MCF 10A (cell line): ENCODE measurements at regions of chr9 and their contacts with region 1.

Region 1: DNA sequence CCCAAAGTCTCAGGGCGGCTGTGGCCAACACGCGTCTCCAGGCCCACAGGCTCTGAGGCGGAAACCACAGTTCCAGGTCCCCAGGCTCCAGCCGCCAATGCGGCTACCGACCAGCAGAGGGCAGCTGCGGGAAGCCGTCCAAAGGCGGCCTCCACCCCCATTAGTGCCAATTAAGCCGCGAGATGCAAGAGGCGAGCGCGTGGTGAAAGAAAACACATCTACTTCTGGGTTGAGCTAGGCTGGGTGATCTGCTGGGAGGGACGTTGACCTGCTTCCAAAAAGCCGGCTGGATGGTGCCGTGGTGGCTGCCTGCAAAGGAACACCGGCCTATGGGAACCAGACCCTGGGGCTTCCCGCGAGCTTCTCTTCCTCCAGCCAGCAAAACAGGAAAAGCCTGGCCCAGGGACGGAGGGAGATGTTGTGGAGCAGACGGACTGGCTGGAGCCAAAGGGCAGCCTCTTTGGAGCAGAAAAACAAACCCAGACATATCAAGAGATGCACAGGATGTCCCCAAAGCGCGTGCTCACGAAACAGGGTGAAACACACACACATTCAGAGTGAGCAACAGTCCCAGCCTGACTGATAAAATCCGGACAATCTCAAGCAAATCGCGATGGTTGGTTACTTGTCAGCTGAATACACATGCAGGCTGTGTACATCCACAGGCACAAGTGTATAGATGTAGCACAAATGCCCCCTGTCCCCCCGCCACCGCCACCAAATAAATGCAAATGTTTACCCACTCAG is 187.1 kb upstream of the BRINP1 start:
- DNase-seq: peak; percentile 40
- H3K4me3 Mint-ChIP-seq: no peak overlapping the region
- H3K27ac Mint-ChIP-seq: no peak overlapping the region
- H3K4me1 Mint-ChIP-seq: no peaks in the 10 kb centered on the region
- H3K27me3 Mint-ChIP-seq: peaks cover 12% of the 10 kb centered on the region
- CTCF ChIP-seq: peak; percentile 74

Region 2: GRCh38 chr9:119137479-119137878 is 418.8 kb before region 1 on chr9:
- CTCF ChIA-PET with region 1: no interaction called
- POLR2A ChIA-PET with region 1: no interaction called
- intact Hi-C with region 1: no loop called
- DNase-seq: no peak
- H3K4me3 Mint-ChIP-seq: no peak overlapping the region
- H3K27ac Mint-ChIP-seq: no peak overlapping the region
- H3K4me1 Mint-ChIP-seq: no peaks in the 10 kb centered on the region
- H3K27me3 Mint-ChIP-seq: no peaks in the 10 kb centered on the region
- CTCF ChIP-seq: no peak

Region 3: DNA sequence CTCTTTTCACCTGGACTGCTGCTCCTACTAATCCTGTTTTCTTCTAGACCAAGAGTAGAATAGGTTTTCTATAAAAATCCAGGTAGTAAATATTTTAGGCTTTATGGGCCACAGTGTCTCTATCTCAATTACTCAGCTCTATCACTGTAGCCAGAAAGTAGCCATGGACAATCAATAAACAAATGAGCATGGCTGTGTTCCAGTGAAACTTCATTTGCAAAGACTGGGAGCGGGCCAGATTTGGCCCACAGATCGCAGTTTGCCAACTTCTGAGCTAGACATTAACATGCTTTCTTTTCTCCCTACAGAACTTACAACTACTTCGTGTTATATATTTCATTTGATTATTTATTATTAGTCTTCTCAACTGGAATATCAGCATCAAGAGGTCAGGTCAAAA is 217.2 kb before region 1 on chr9:
- CTCF ChIA-PET with region 1: no interaction called
- POLR2A ChIA-PET with region 1: no interaction called
- intact Hi-C with region 1: no loop called
- DNase-seq: no peak
- H3K4me3 Mint-ChIP-seq: no peak overlapping the region
- H3K27ac Mint-ChIP-seq: no peak overlapping the region
- H3K4me1 Mint-ChIP-seq: no peaks in the 10 kb centered on the region
- H3K27me3 Mint-ChIP-seq: no peaks in the 10 kb centered on the region
- CTCF ChIP-seq: no peak

Region 4: GRCh38 chr9:119458068-119458467 is 98.2 kb before region 1 on chr9:
- CTCF ChIA-PET with region 1: no interaction called
- POLR2A ChIA-PET with region 1: no interaction called
- intact Hi-C with region 1: no loop called
- DNase-seq: peak; percentile 27
- H3K4me3 Mint-ChIP-seq: no peak overlapping the region
- H3K27ac Mint-ChIP-seq: no peak overlapping the region
- H3K4me1 Mint-ChIP-seq: peaks cover 25% of the 10 kb centered on the region
- H3K27me3 Mint-ChIP-seq: no peaks in the 10 kb centered on the region
- CTCF ChIP-seq: no peak

Region 5: DNA sequence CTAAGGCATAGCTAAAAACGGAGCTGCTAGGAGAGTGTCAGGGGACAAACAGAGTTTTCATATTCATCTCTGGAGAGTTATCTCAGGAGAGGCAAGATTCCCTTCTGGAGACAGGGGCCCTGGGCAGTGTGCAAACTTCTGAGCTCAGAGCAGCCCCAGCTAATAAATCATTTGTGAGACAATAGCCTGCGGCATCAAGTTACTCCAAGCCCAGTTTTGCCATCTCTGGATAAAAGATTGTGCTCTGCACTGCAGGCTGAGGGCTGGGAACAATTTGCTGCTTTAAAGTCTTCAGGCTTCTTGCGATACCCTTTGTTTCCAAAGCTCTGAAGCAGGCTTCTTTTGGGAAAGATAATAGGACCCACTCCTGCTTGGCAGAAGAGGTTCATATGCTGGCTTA is 22.8 kb before region 1 on chr9:
- CTCF ChIA-PET with region 1: interaction called, 13 read pairs
- POLR2A ChIA-PET with region 1: no interaction called
- intact Hi-C with region 1: no loop called
- DNase-seq: no peak
- H3K4me3 Mint-ChIP-seq: no peak overlapping the region
- H3K27ac Mint-ChIP-seq: no peak overlapping the region
- H3K4me1 Mint-ChIP-seq: no peaks in the 10 kb centered on the region
- H3K27me3 Mint-ChIP-seq: no peaks in the 10 kb centered on the region
- CTCF ChIP-seq: no peak

Region 6: DNA sequence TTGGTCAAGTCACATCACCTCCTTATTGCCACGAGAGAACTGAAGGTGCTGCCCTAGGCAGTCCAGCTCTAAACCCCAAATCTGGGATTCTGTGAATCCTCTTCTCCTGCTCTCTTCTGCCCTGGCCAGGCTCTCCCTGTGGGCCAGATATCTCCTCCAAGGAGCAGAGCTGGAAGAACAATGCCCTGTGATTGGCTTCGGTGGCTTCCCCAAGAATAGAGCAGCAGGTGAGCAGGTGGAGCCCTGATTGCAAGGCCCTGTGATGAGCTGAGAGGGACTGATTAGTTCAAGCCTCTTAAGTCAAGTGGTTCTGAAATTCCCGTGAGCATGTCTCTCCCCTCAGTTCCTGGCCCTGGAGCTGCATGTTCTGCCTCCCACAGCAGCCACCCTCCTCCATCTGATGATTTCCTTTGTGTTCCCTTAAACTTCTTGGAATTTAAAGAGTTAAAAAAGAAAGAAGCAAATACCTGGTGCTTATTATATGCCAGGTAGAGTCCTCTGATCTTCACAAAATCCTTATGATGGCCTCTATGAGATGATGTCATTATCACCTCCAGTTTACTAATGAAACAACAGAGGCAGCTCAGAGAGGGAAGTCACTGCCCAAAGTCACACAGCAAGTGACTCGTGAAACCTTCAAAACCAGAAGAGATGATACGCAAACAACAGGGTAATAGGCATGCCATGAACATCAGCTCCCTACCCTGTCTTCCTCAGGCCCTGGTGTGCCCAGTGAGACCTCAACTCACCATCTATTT is 11.6 kb before region 1 on chr9:
- CTCF ChIA-PET with region 1: interaction called, 13 read pairs
- POLR2A ChIA-PET with region 1: no interaction called
- intact Hi-C with region 1: no loop called
- DNase-seq: no peak
- H3K4me3 Mint-ChIP-seq: no peak overlapping the region
- H3K27ac Mint-ChIP-seq: no peak overlapping the region
- H3K4me1 Mint-ChIP-seq: no peaks in the 10 kb centered on the region
- H3K27me3 Mint-ChIP-seq: no peaks in the 10 kb centered on the region
- CTCF ChIP-seq: no peak

Region 7: DNA sequence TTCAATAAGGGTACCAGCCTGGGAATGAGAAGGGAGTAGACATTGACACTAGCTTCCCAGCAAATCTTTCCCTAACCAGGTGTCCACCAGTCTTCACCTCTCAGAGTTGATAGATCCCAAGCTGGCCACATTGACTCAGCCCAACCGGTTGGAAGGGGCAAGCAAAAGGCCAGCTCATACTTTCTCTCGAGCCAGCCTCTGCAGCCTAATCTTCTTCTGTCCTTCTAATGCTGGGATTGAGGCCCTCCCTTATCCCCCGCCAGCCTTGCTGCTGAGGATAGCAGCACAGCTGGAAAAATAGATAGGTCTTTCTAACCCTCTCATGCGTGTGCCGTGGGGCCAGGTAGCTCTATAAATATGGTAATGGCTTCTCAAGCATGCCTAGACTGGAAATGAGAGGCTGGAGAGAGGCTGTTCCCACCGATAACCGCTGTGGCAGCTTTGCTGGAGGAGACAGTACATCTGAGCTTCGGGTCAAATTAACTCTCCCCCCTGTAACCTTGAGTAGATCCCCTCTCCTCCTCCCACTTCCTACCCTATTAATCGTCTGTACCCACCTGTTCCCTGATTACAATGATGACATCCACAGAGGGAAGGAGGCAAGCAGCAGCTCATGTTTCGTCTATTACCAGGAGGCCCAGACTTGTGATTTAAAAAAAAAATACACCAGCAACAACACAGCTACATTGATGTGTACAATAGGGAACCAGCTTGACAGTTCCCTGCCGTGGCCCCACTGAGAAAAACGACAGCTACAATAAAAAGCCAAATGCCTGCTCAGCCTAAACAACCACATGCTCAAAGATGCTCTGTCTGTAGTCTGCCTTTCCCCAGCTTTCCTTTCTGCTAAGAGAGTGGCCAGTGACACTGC is 32.8 kb after region 1 on chr9:
- CTCF ChIA-PET with region 1: interaction called, 11 read pairs
- POLR2A ChIA-PET with region 1: no interaction called
- intact Hi-C with region 1: no loop called
- DNase-seq: no peak
- H3K4me3 Mint-ChIP-seq: no peak overlapping the region
- H3K27ac Mint-ChIP-seq: no peak overlapping the region
- H3K4me1 Mint-ChIP-seq: no peaks in the 10 kb centered on the region
- H3K27me3 Mint-ChIP-seq: no peaks in the 10 kb centered on the region
- CTCF ChIP-seq: no peak

Region 8: GRCh38 chr9:119689879-119690278 is 133.6 kb after region 1 on chr9:
- CTCF ChIA-PET with region 1: no interaction called
- POLR2A ChIA-PET with region 1: no interaction called
- intact Hi-C with region 1: loop called (anchors 10 kb)
- DNase-seq: peak; percentile 2
- H3K4me3 Mint-ChIP-seq: no peak overlapping the region
- H3K27ac Mint-ChIP-seq: no peak overlapping the region
- H3K4me1 Mint-ChIP-seq: no peaks in the 10 kb centered on the region
- H3K27me3 Mint-ChIP-seq: no peaks in the 10 kb centered on the region
- CTCF ChIP-seq: no peak

Region 9: GRCh38 chr9:120348951-120349429 is 792.7 kb after region 1 on chr9:
- CTCF ChIA-PET with region 1: interaction called, 39 read pairs
- POLR2A ChIA-PET with region 1: no interaction called
- intact Hi-C with region 1: loop called (anchors 1 kb)
- DNase-seq: peak; percentile 64
- H3K4me3 Mint-ChIP-seq: no peak overlapping the region
- H3K27ac Mint-ChIP-seq: no peak overlapping the region
- H3K4me1 Mint-ChIP-seq: peaks cover 5% of the 10 kb centered on the region
- H3K27me3 Mint-ChIP-seq: no peaks in the 10 kb centered on the region
- CTCF ChIP-seq: peak; percentile 87

Region 10: GRCh38 chr9:120477521-120478001 is 921.3 kb after region 1 on chr9:
- CTCF ChIA-PET with region 1: interaction called, 18 read pairs
- POLR2A ChIA-PET with region 1: no interaction called
- intact Hi-C with region 1: loop called (anchors 1 kb)
- DNase-seq: peak; percentile 97
- H3K4me3 Mint-ChIP-seq: no peak overlapping the region
- H3K27ac Mint-ChIP-seq: no peak overlapping the region
- H3K4me1 Mint-ChIP-seq: peaks cover 23% of the 10 kb centered on the region
- H3K27me3 Mint-ChIP-seq: no peaks in the 10 kb centered on the region
- CTCF ChIP-seq: peak; percentile 82